Naive thymus-derived CD4-positive, alpha-beta T cell (primary cell): ENCODE measurements at regions of chr15 and their contacts with region 1.

Region 1: GRCh38 chr15:58484791-58485600 is 53.2 kb downstream of the LIPC start:
- DNase-seq: peak in 6 of 9 donors; percentile 56 to 73 (median 65)
- ATAC-seq: peak; percentile 85
- H3K4me3 ChIP-seq: peak overlapping the region; percentile 25
- H3K4me3 Mint-ChIP-seq: peak overlapping the region; percentile 61 to 81 (median 72)
- H3K27ac ChIP-seq: peak overlapping the region; percentile 42
- H3K27ac Mint-ChIP-seq: peak overlapping the region; percentile 80 to 95 (median 90)
- H3K4me1 ChIP-seq: peaks cover 42 to 45% of the 10 kb centered on the region in 2 donors
- H3K4me1 Mint-ChIP-seq: peaks cover 36 to 52% (median 48%) of the 10 kb centered on the region in 7 donors
- H3K27me3 ChIP-seq: no peaks in the 10 kb centered on the region
- H3K27me3 Mint-ChIP-seq: no peaks in the 10 kb centered on the region

Region 2: GRCh38 chr15:58545307-58546065 is 60.5 kb after region 1 on chr15:
- CTCF ChIA-PET with region 1: no interaction called
- POLR2A ChIA-PET with region 1: no interaction called
- intact Hi-C with region 1: loop called in 1 of 2 experiments (anchors 2 kb)
- DNase-seq: peak in 1 of 9 donors; percentile 47
- ATAC-seq: no peak
- H3K4me3 ChIP-seq: no peak overlapping the region
- H3K4me3 Mint-ChIP-seq: peak overlapping the region in 7 of 10 donors; percentile 2 to 64 (median 23)
- H3K27ac ChIP-seq: no peak overlapping the region
- H3K27ac Mint-ChIP-seq: peak overlapping the region in 8 of 9 donors; percentile 34 to 98 (median 52)
- H3K4me1 ChIP-seq: peaks cover 0 to 12% of the 10 kb centered on the region in 2 donors
- H3K4me1 Mint-ChIP-seq: peaks cover 14 to 65% (median 19%) of the 10 kb centered on the region in 7 donors
- H3K27me3 ChIP-seq: no peaks in the 10 kb centered on the region
- H3K27me3 Mint-ChIP-seq: no peaks in the 10 kb centered on the region

Region 3: GRCh38 chr15:58597943-58598828 is 113.2 kb after region 1 on chr15:
- CTCF ChIA-PET with region 1: no interaction called
- POLR2A ChIA-PET with region 1: no interaction called
- intact Hi-C with region 1: no loop called
- DNase-seq: no peak
- ATAC-seq: no peak
- H3K4me3 ChIP-seq: no peak overlapping the region
- H3K4me3 Mint-ChIP-seq: no peak overlapping the region
- H3K27ac ChIP-seq: no peak overlapping the region
- H3K27ac Mint-ChIP-seq: peak overlapping the region in 6 of 9 donors; percentile 20 to 72 (median 60)
- H3K4me1 ChIP-seq: no peaks in the 10 kb centered on the region
- H3K4me1 Mint-ChIP-seq: peaks cover 0 to 38% (median 3%) of the 10 kb centered on the region in 7 donors
- H3K27me3 ChIP-seq: no peaks in the 10 kb centered on the region
- H3K27me3 Mint-ChIP-seq: no peaks in the 10 kb centered on the region

Region 4: DNA sequence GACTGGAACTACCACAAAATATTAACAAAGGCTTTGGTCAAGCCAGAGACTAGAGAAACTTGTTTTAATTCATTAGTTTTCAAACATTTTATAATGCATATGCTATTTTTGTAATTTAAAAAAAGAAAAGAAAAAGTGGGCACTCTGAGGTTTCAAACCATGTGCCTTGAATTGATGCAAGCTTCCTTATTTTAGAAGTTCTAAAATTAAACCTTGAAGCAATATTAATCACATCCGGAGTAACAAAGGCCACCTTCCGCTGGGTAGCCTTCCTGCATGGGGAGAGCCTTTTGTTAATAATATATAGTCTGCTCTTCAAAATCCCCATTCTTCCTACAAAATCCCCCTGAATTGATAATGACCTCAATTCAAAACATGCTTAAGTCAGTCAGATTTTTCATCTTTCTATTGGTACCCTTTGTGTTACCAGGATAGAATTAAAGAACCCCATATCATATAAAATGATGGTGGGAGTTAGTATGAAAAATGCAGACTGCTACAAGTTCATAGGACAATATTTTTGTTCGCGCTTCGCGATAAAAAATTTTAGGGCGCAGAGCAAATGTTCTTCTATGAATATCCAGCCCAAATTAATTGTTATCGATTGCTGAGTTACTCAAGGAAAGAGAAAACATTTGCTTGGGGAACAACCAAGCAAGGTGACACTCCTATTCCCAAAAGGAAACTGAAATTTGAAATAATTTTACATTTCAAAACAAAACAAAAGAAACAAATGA is 752.3 kb after region 1 on chr15:
- CTCF ChIA-PET with region 1: no interaction called
- POLR2A ChIA-PET with region 1: no interaction called
- intact Hi-C with region 1: no loop called
- DNase-seq: no peak
- ATAC-seq: peak; percentile 37
- H3K4me3 ChIP-seq: no peak overlapping the region
- H3K4me3 Mint-ChIP-seq: no peak overlapping the region
- H3K27ac ChIP-seq: no peak overlapping the region
- H3K27ac Mint-ChIP-seq: no peak overlapping the region
- H3K4me1 ChIP-seq: no peaks in the 10 kb centered on the region
- H3K4me1 Mint-ChIP-seq: peaks cover 0 to 9% (median 0%) of the 10 kb centered on the region in 7 donors
- H3K27me3 ChIP-seq: no peaks in the 10 kb centered on the region
- H3K27me3 Mint-ChIP-seq: peaks cover 0 to 7% (median 4%) of the 10 kb centered on the region in 5 donors